Sigmoid colon (tissue), 7 donors: ENCODE measurements at regions of chr16 and their contacts with region 1.

Region 1: GRCh38 chr16:75238132-75238852 is 13.1 kb downstream of the BCAR1 start:
- DNase-seq: peak; percentile 96
- H3K4me3 ChIP-seq: peak overlapping the region in 1 of 4 donors; percentile 18
- H3K27ac ChIP-seq: peak overlapping the region; percentile 82 to 92 (median 84)
- H3K4me1 ChIP-seq: peaks cover 0 to 61% (median 50%) of the 10 kb centered on the region in 4 donors
- H3K27me3 ChIP-seq: no peaks in the 10 kb centered on the region
- CTCF ChIP-seq: peak in 1 of 4 experiments; percentile 6
- EP300 ChIP-seq: peak in 2 of 4 donors; percentile 33 to 40
- POLR2A ChIP-seq: no peak

Region 2: GRCh38 chr16:74984535-74985296 is 253.6 kb before region 1 on chr16 and contains the start of gene WDR59:
- intact Hi-C with region 1: loop called (anchors 10 kb)
- DNase-seq: peak; percentile 100
- H3K4me3 ChIP-seq: peak within 1 kb of the TSS; percentile 69 to 99 (median 84)
- H3K27ac ChIP-seq: peak within 1 kb of the TSS; percentile 76 to 88 (median 80)
- H3K4me1 ChIP-seq: peaks cover 0 to 23% (median 16%) of the 10 kb centered on the region in 4 donors
- H3K27me3 ChIP-seq: no peaks in the 10 kb centered on the region
- CTCF ChIP-seq: no peak
- EP300 ChIP-seq: no peak
- POLR2A ChIP-seq: peak in 1 of 2 donors; percentile 34
- total RNA-seq, gene WDR59: 15.1 to 40.7 (median 24.6) TPM

Region 3: GRCh38 chr16:75265845-75266701 is 27.8 kb after region 1 on chr16:
- intact Hi-C with region 1: loop called (anchors 1 kb)
- DNase-seq: peak; percentile 90
- H3K4me3 ChIP-seq: peak overlapping the region; percentile 72 to 99 (median 86)
- H3K27ac ChIP-seq: peak overlapping the region; percentile 90 to 97 (median 95)
- H3K4me1 ChIP-seq: peaks cover 0 to 60% (median 52%) of the 10 kb centered on the region in 4 donors
- H3K27me3 ChIP-seq: no peaks in the 10 kb centered on the region
- CTCF ChIP-seq: no peak
- EP300 ChIP-seq: no peak
- POLR2A ChIP-seq: no peak

Region 4: DNA sequence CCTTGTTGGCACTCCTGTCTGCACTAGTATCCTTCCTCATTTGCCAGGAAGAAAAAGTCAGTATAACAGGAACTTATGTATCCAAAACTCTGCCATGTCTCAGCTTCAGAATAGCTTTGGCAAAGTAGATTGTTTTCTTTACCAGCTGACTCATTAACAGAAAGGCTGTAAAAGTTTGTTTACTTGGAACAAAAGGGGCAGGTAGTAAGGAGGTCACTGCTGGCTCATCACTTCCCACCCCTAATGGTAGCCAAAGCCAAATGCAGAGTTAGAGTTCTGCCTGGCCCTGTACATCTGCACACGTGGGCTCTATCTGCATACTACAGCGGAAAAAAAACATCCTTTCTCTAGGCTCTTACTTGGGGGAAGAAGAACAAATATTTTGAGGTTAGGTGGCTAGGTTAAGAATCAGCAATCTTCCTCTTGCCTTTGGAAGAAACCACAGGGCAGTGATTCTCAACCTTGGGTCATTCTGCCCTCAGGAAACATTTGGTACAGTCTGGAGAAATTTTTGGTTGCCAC is 104.1 kb after region 1 on chr16:
- intact Hi-C with region 1: loop called (anchors 1 kb)
- DNase-seq: no peak
- H3K4me3 ChIP-seq: no peak overlapping the region
- H3K27ac ChIP-seq: peak overlapping the region; percentile 47 to 76 (median 60)
- H3K4me1 ChIP-seq: peaks cover 0 to 43% (median 35%) of the 10 kb centered on the region in 4 donors
- H3K27me3 ChIP-seq: no peaks in the 10 kb centered on the region
- CTCF ChIP-seq: no peak
- EP300 ChIP-seq: peak in 1 of 4 donors; percentile 14
- POLR2A ChIP-seq: no peak

Region 5: GRCh38 chr16:75385507-75386152 is 147.3 kb after region 1 on chr16:
- intact Hi-C with region 1: loop called (anchors 1 kb)
- DNase-seq: no peak
- H3K4me3 ChIP-seq: no peak overlapping the region
- H3K27ac ChIP-seq: no peak overlapping the region
- H3K4me1 ChIP-seq: peaks cover 0 to 20% (median 4%) of the 10 kb centered on the region in 4 donors
- H3K27me3 ChIP-seq: no peaks in the 10 kb centered on the region
- CTCF ChIP-seq: peak; percentile 54 to 75 (median 64)
- EP300 ChIP-seq: no peak
- POLR2A ChIP-seq: no peak

Region 6: GRCh38 chr16:77009453-77009852 is 1771.2 kb after region 1 on chr16:
- intact Hi-C with region 1: no loop called
- DNase-seq: no peak
- H3K4me3 ChIP-seq: no peak overlapping the region
- H3K27ac ChIP-seq: no peak overlapping the region
- H3K4me1 ChIP-seq: no peaks in the 10 kb centered on the region
- H3K27me3 ChIP-seq: no peaks in the 10 kb centered on the region
- CTCF ChIP-seq: no peak
- EP300 ChIP-seq: no peak
- POLR2A ChIP-seq: no peak